Vagina (tissue), 2 donors: ENCODE measurements at regions of chr5 and their contacts with region 1.

Region 1: GRCh38 chr5:142922223-142922952 is 152.2 kb downstream of the ARHGAP26 start:
- DNase-seq: no peak
- H3K4me3 ChIP-seq: no peak overlapping the region
- H3K27ac ChIP-seq: no peak overlapping the region
- H3K4me1 ChIP-seq: peaks cover 18% of the 10 kb centered on the region
- H3K27me3 ChIP-seq: no peaks in the 10 kb centered on the region
- CTCF ChIP-seq: peak; percentile 3 to 63 (median 22)
- POLR2A ChIP-seq: no peak

Region 2: GRCh38 chr5:143033535-143034250 is 111.3 kb after region 1 on chr5:
- intact Hi-C with region 1: no loop called
- DNase-seq: no peak
- H3K4me3 ChIP-seq: no peak overlapping the region
- H3K27ac ChIP-seq: no peak overlapping the region
- H3K4me1 ChIP-seq: no peaks in the 10 kb centered on the region
- H3K27me3 ChIP-seq: no peaks in the 10 kb centered on the region
- CTCF ChIP-seq: no peak
- POLR2A ChIP-seq: no peak

Region 3: DNA sequence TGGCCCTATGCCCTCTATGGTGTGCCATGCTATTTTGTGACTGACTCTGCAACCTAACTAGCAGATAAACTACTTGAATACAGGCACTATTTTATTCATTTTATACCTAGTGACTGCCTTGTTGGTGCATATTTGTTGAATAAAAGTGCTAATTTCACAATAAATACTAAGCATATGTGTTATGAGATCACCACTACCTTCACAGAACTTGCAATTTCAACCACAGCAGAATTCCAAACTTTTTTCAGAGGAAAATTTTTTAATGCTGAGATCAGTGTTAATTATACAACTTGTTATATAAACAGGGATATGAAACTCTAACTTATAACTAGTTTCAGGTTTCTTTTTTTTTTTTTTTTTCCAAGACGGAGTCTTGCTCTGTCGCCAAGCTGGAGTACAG is 386.3 kb after region 1 on chr5:
- intact Hi-C with region 1: no loop called
- DNase-seq: no peak
- H3K4me3 ChIP-seq: no peak overlapping the region
- H3K27ac ChIP-seq: no peak overlapping the region
- H3K4me1 ChIP-seq: no peaks in the 10 kb centered on the region
- H3K27me3 ChIP-seq: no peaks in the 10 kb centered on the region
- CTCF ChIP-seq: no peak
- POLR2A ChIP-seq: no peak

Region 4: GRCh38 chr5:143386725-143387124 is 464.3 kb after region 1 on chr5:
- intact Hi-C with region 1: loop called (anchors 10 kb)
- DNase-seq: no peak
- H3K4me3 ChIP-seq: no peak overlapping the region
- H3K27ac ChIP-seq: no peak overlapping the region
- H3K4me1 ChIP-seq: peaks cover 25% of the 10 kb centered on the region
- H3K27me3 ChIP-seq: no peaks in the 10 kb centered on the region
- CTCF ChIP-seq: no peak
- POLR2A ChIP-seq: no peak

Region 5: DNA sequence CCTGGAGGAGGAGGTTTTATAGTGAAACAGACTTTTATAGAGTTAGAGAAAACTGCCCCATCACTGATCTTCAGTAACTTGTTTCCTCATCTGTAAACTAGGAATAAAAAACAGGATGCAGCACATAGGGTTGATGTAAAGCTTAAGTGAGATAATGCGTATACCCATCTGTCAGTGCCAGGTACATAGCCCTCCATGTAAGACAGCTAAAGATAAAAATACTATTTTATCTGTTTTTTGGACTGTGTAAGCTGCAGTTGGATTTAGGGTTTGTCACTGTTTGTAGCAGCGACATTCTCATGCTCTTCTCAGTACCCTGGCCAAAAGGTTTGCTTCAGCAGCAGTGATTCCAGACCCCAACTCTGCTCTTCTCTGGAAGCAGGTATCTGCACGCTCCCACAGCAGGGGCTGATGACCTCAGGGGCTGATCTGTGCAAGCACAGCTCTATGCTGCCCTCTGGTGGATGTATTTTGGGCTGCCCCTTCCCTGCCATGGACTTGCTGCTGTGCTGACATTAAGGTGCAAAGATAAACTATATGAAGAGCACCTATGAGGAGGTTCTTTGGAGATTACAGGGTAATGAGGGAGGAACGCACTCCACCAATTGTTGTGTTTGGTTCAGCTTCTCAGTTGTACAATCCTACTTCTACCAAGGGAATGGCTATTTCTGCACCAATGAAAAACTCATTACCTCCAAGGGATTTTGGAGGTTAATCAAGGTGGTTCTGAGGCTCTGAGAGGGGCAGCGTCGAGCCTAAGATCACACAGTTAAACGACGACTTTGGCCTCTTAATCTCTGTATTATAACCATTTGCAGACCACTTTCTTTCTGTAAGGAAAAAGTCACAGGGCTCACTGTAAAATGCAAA is 902.7 kb after region 1 on chr5:
- intact Hi-C with region 1: loop called (anchors 10 kb)
- DNase-seq: no peak
- H3K4me3 ChIP-seq: no peak overlapping the region
- H3K27ac ChIP-seq: no peak overlapping the region
- H3K4me1 ChIP-seq: no peaks in the 10 kb centered on the region
- H3K27me3 ChIP-seq: no peaks in the 10 kb centered on the region
- CTCF ChIP-seq: peak; percentile 92 to 94 (median 94)
- POLR2A ChIP-seq: no peak

Region 6: DNA sequence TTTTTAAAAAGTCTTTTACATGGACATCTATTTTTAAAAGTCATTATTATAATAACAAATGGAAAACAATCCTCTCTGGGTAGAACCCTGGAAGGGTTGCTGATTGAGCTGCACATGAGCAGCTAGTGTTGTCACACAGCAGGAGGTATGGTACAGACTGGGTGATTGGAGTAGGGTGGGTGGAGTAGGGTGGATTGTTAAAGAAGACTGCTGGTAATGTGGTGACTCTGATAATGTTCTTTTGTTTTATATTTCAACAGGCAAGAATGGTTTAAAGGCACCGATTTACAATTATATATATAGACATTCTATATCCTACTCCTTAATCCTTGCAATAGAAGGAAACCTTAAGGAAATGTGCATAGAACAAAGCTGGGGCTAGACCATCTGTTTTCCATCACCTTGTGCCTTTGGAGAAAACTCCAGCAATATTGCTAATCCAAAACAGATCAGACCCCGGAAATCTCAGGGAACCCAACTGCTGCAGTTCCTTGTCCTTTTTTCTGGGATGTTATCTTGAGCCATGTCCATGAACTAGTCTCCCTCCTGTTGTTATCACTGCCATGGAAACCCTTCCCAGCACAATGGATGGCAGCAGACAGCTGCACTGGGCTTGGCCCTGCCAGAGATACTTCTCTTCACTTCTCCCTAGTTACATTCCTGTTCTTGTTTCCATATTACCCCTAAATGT is 1118.4 kb after region 1 on chr5:
- intact Hi-C with region 1: no loop called
- DNase-seq: no peak
- H3K4me3 ChIP-seq: no peak overlapping the region
- H3K27ac ChIP-seq: no peak overlapping the region
- H3K4me1 ChIP-seq: no peaks in the 10 kb centered on the region
- H3K27me3 ChIP-seq: no peaks in the 10 kb centered on the region
- CTCF ChIP-seq: no peak
- POLR2A ChIP-seq: no peak